Activated CD8-positive, alpha-beta T cell treated with anti-CD3 and anti-CD28 coated beads, Interleukin-2, amount 10 ng/mL, durations not matched to agents 7 days and 5 days (primary cell): ENCODE measurements at regions of chr1 and their contacts with region 1.

Region 1: DNA sequence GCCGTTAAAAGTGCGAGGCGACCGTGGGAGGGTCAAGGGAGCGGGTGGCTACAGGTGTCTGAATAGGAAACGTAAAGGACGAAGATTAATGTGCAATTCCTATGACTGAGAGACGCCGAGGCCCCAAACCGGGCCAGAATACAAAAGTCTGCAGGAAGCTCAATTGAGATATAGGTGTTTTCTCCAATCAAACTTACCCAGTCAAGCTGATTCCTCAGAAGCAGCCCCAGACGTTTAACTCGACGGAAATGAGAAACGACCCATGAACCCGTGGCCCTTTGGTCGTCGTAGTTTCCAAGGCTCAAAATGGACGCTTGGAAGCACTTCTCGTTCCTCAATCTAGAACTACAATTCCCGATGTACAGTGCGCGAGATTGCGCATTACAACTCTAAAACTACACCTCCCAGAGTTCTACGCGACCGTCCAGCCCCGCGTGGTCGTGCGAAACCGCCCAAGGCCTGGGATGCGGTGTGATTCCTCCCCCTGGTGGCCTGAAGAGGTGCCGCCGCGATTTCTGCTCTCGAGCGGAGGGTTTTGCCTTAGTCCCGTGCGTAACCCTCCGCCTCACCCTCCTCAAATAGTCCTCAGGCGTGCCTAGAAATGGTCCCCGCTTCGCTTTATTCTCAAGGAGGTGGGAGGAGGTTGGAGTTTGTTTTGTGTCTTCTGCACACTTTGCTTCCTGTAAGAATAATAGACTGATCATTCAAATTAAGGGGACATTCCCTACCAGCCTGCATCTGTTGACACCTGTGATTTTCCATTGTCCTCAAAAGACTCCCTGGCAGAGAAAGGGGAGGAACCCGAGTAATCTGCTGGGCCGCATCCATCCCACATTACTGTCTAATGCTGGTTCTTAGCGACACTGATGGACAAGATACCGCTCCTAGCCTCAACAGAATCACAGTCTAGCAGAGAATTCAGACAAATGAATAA is at the start of gene PAFAH2:
- DNase-seq: peak; percentile 99
- ATAC-seq: peak; percentile 97
- H3K4me3 Mint-ChIP-seq: peak within 1 kb of the TSS; percentile 93
- H3K27ac Mint-ChIP-seq: peak within 1 kb of the TSS; percentile 95
- H3K4me1 Mint-ChIP-seq: peaks cover 30% of the 10 kb centered on the region
- H3K27me3 Mint-ChIP-seq: no peaks in the 10 kb centered on the region
- total RNA-seq, gene PAFAH2: 9.1 to 10.9 TPM

Region 2: DNA sequence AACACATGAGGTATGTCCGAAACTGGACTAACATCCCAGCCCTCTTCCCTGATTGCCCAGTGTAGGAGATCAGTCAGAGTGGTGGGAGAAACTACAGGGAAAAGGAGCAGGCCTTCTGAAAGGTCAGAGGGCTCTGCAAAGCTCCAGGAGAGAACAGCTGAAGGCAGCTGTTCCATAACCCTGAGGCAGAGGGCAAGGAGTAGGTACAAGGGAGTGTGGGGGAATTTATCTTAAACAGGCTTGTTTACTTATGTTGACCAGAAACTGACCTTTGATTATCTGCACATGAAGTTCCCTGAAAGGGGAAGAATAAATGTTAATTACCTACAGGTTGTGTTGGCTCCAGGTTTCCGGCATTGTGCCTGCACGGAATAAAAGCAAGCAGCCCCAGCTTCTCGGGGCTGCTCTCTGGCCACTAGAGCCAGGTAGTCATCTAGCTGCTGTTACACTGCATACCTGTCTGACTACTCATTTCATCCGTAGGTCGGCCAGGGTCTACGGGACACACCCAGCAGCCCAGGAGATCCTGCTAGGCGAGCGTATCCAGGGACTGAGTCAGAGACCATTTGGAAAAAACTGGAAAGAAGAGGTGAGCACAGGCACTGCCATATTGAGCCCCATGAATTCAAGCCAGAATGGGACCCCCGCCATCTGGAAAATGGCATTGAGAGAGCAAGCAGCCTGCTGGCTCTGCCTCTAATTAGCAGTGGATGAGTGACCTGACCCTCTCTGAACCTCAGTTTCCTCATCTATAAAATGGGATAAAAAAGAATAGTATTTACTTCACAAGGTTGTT is 107.7 kb before region 1 on chr1:
- CTCF ChIA-PET with region 1: interaction called, 610 read pairs
- POLR2A ChIA-PET with region 1: interaction called, 48 read pairs
- DNase-seq: no peak
- ATAC-seq: no peak
- H3K4me3 Mint-ChIP-seq: no peak overlapping the region
- H3K27ac Mint-ChIP-seq: peak overlapping the region; percentile 7
- H3K4me1 Mint-ChIP-seq: peaks cover 4% of the 10 kb centered on the region
- H3K27me3 Mint-ChIP-seq: no peaks in the 10 kb centered on the region

Region 3: GRCh38 chr1:25912076-25912831 is 85.8 kb before region 1 on chr1:
- CTCF ChIA-PET with region 1: interaction called, 610 read pairs
- POLR2A ChIA-PET with region 1: interaction called, 53 read pairs
- DNase-seq: no peak
- ATAC-seq: no peak
- H3K4me3 Mint-ChIP-seq: no peak overlapping the region
- H3K27ac Mint-ChIP-seq: no peak overlapping the region
- H3K4me1 Mint-ChIP-seq: no peaks in the 10 kb centered on the region
- H3K27me3 Mint-ChIP-seq: peaks cover 19% of the 10 kb centered on the region

Region 4: GRCh38 chr1:25971066-25971810 is 26.9 kb before region 1 on chr1:
- CTCF ChIA-PET with region 1: interaction called, 26 read pairs
- POLR2A ChIA-PET with region 1: interaction called, 10 read pairs
- DNase-seq: peak; percentile 26
- ATAC-seq: peak; percentile 82
- H3K4me3 Mint-ChIP-seq: peak overlapping the region; percentile 16
- H3K27ac Mint-ChIP-seq: peak overlapping the region; percentile 80
- H3K4me1 Mint-ChIP-seq: peaks cover 19% of the 10 kb centered on the region
- H3K27me3 Mint-ChIP-seq: no peaks in the 10 kb centered on the region

Region 5: GRCh38 chr1:26016388-26017188 is 18.5 kb after region 1 on chr1:
- CTCF ChIA-PET with region 1: interaction called, 10 read pairs
- POLR2A ChIA-PET with region 1: no interaction called
- DNase-seq: no peak
- ATAC-seq: peak; percentile 19
- H3K4me3 Mint-ChIP-seq: no peak overlapping the region
- H3K27ac Mint-ChIP-seq: peak overlapping the region; percentile 20
- H3K4me1 Mint-ChIP-seq: peaks cover 29% of the 10 kb centered on the region
- H3K27me3 Mint-ChIP-seq: peaks cover 13% of the 10 kb centered on the region

Region 6: DNA sequence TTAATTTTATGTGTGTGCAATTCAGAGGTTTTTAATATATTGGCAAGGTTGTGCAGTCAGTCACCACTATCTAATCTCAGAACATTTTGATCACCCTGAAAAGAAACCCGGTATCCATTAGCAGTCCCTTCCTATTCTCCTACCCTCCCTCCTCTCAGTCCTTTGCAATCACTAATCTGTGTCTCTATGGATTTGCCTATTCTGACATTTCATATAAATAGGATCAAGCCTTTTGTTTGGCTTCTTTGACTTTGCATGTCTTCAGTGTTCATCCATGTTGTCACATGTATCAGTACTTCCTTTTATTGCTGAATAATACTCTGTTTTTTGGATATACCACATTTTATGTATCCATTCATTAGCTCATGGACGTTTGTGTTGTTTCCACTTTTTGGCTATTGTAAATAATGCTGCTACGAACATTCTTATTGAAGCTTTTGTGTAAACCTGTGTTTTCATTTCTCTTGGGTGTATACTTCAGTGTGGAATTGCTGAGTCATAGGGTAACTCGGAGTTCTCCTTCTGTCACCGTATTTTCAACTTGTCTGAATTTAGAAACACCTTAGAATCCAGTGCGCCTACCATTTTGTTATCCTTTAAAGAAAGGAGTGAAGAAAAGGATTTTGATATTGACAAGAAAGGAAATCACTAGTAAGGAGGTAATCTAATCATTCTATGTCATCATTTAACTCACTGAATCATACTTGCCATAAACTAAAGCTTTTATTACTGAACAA is 239.3 kb after region 1 on chr1:
- CTCF ChIA-PET with region 1: no interaction called
- POLR2A ChIA-PET with region 1: no interaction called
- DNase-seq: no peak
- ATAC-seq: no peak
- H3K4me3 Mint-ChIP-seq: no peak overlapping the region
- H3K27ac Mint-ChIP-seq: no peak overlapping the region
- H3K4me1 Mint-ChIP-seq: peaks cover 40% of the 10 kb centered on the region
- H3K27me3 Mint-ChIP-seq: no peaks in the 10 kb centered on the region